GM12878 (cell line): ENCODE measurements at regions of chr5 and their contacts with region 1.

Region 1: DNA sequence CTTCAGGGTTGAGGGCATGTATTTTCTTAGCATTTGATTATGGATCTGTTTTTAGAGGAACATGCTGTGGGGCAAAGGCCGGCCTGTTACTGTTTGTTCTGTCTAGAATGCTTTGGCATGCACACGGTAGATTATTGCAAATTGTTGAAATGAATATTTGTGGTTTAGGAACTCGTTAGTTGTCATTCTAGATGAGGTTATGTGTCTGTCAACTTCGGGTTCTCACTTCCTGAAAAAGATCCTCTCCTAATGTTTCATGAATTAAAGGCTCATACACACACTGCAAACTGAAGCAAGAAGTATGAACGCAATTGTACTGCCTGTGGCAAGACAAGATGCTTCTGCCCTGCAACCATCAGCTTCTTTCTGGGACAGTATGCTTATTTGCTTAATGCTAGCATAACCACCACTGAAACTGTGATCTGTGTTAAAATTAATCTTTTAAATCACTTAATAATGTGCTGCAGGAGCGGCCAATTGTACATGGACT is 99.6 kb downstream of the BASP1 start:
- DNase-seq: peak; percentile 82
- ATAC-seq: peak; percentile 79
- H3K4me3 ChIP-seq: 0 out of 2 replicates have a peak overlapping the region, but pooled peaks have one; percentile 16
- H3K27ac ChIP-seq: peak overlapping the region; percentile 66
- H3K4me1 ChIP-seq: peaks cover 43% of the 10 kb centered on the region
- H3K27me3 ChIP-seq: no peaks in the 10 kb centered on the region
- CTCF ChIP-seq: no peak
- EP300 ChIP-seq: peak; percentile 95 to 98
- POLR2A ChIP-seq: no peak
- RAD21 ChIP-seq: no peak

Region 2: GRCh38 chr5:17221843-17222636 is 95.0 kb before region 1 on chr5:
- CTCF ChIA-PET with region 1: interaction called, 16 read pairs
- POLR2A ChIA-PET with region 1: interaction called, 8 read pairs
- RAD21 ChIA-PET with region 1: interaction called, 29 read pairs
- SMC1A ChIA-PET with region 1: interaction called, 36 read pairs
- in situ Hi-C with region 1: loop called (anchors 5 kb)
- intact Hi-C with region 1: loop called (anchors 1 kb)
- DNase-seq: no peak
- ATAC-seq: peak; percentile 33
- H3K4me3 ChIP-seq: peak overlapping the region; percentile 17; the same call in 1 of the 2 replicates
- H3K27ac ChIP-seq: peak overlapping the region; percentile 40
- H3K4me1 ChIP-seq: peaks cover 30% of the 10 kb centered on the region; the same call in 1 of the 2 replicates
- H3K27me3 ChIP-seq: no peaks in the 10 kb centered on the region
- CTCF ChIP-seq: no peak
- EP300 ChIP-seq: no peak
- POLR2A ChIP-seq: no peak
- RAD21 ChIP-seq: no peak

Region 3: GRCh38 chr5:17228821-17229291 is 88.2 kb before region 1 on chr5:
- CTCF ChIA-PET with region 1: interaction called, 5 read pairs
- POLR2A ChIA-PET with region 1: interaction called, 8 read pairs
- RAD21 ChIA-PET with region 1: interaction called, 16 read pairs
- SMC1A ChIA-PET with region 1: interaction called, 36 read pairs
- in situ Hi-C with region 1: loop called (anchors 5 kb)
- intact Hi-C with region 1: loop called (anchors 1 kb)
- DNase-seq: peak; percentile 66
- ATAC-seq: peak; percentile 64
- H3K4me3 ChIP-seq: peak overlapping the region; percentile 13; the same call in 1 of the 2 replicates
- H3K27ac ChIP-seq: peak overlapping the region; percentile 88
- H3K4me1 ChIP-seq: peaks cover 34% of the 10 kb centered on the region
- H3K27me3 ChIP-seq: no peaks in the 10 kb centered on the region
- CTCF ChIP-seq: no peak
- EP300 ChIP-seq: peak; percentile 24 to 35; a peak in 1 of 4 replicates
- POLR2A ChIP-seq: no peak
- RAD21 ChIP-seq: 0 out of 2 replicates have a peak, but pooled peaks have one; percentile 1

Region 4: DNA sequence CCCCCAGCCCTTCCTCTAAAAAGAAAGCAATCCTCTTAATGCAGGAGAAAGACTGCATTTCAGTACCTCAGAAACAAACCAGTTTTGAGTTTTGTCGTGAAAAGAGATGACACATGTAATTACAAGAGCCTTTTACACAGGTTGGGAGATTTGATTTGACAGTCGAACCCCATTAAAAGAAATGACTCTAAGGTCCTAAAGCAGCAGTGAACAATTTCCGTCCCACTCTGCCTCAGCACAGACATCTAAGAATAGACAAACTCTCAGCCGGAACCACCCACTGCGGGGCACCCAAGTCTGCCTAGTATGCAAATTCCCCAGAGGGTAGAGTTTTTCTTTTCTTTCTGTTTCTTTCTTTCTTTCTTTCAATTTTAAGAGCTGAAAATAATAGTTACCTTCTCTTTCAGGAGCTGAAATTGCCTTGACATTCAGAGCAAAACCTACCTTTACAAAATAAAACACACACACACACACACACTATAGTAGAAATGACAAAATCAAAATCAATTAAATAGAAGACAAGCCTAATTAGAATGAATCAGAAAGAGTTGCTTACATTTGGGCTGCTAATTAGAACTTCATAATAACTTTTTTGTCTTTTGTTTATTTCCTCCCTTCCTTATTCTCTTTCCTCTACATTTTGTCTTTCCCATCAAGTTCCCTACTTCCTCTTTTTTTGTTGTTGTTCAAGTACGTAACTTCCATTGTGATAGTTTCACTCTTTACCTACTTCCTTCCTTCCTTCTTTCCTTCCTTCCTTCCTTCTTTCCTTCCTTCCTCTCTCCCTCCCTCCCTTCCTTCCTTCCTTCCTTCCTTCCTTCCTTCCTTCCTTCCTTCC is 34.5 kb before region 1 on chr5:
- CTCF ChIA-PET with region 1: interaction called, 4 read pairs
- POLR2A ChIA-PET with region 1: interaction called, 12 read pairs
- RAD21 ChIA-PET with region 1: interaction called, 23 read pairs
- SMC1A ChIA-PET with region 1: interaction called, 17 read pairs
- in situ Hi-C with region 1: loop called (anchors 5 kb)
- intact Hi-C with region 1: loop called (anchors 1 kb)
- DNase-seq: peak; percentile 91
- ATAC-seq: peak; percentile 95
- H3K4me3 ChIP-seq: peak overlapping the region; percentile 55
- H3K27ac ChIP-seq: peak overlapping the region; percentile 71
- H3K4me1 ChIP-seq: peaks cover 18% of the 10 kb centered on the region
- H3K27me3 ChIP-seq: no peaks in the 10 kb centered on the region
- CTCF ChIP-seq: no peak; a peak in 1 of 6 replicates
- EP300 ChIP-seq: peak; percentile 45 to 61; a peak in 3 of 4 replicates
- POLR2A ChIP-seq: no peak
- RAD21 ChIP-seq: no peak; the same call in 1 of the 2 replicates

Region 5: GRCh38 chr5:17426104-17426749 is 109.2 kb after region 1 on chr5:
- CTCF ChIA-PET with region 1: no interaction called
- POLR2A ChIA-PET with region 1: no interaction called
- RAD21 ChIA-PET with region 1: interaction called, 3 read pairs
- SMC1A ChIA-PET with region 1: interaction called, 3 read pairs
- in situ Hi-C with region 1: no loop called
- intact Hi-C with region 1: loop called (anchors 2 kb)
- DNase-seq: peak; percentile 11
- ATAC-seq: peak; percentile 93
- H3K4me3 ChIP-seq: no peak overlapping the region; the same call in 1 of the 2 replicates
- H3K27ac ChIP-seq: no peak overlapping the region
- H3K4me1 ChIP-seq: peaks cover 14% of the 10 kb centered on the region
- H3K27me3 ChIP-seq: no peaks in the 10 kb centered on the region
- CTCF ChIP-seq: no peak
- EP300 ChIP-seq: no peak
- POLR2A ChIP-seq: no peak
- RAD21 ChIP-seq: no peak

Region 6: DNA sequence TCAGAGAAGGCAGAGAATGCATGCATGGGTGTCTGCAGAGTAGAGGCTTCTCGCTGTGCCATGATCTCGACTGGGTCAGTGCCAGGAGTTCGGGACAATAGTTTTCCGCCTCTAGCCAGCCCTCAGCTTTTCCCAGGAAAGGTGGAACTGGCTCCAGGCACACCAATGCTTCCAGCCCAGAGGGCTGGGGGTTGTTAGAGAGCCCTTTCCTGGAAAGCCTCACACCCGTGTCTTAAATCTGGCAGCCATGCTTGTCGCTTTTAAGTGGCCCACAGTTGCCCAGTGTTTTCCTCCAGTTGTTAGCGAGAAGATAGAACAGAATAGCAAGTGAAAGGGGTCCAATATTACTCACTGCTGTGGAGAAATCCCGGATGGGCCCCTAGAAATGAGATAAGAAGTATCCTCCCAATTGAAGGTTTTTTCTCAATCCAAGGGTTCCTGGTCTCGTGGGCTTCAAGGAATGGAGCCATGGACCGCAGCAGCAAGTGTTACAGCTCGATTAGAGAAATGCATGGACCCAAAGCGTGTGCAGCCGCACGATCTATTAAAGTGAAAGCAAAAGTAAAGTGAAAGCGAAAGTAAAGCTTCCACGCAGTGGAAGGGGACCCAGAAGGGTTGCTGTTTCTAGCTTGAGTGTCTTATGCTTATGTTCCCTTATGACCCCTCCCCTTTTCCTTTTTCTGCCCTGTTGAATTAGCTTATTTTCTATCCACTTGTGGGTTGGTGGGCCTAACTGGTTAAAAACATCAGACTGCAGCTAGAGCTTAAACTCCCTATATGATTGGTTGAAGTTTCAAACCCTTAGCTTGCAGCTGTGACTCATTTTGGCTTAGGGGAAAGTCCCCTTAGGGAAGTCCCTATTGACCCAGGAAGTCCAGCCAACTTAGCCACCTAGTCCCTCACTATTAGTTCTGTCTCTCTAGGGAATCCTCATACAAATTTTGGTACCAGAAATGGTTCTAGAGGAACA is 1428.9 kb after region 1 on chr5:
- CTCF ChIA-PET with region 1: no interaction called
- POLR2A ChIA-PET with region 1: no interaction called
- RAD21 ChIA-PET with region 1: no interaction called
- SMC1A ChIA-PET with region 1: no interaction called
- in situ Hi-C with region 1: no loop called
- intact Hi-C with region 1: loop called (anchors 5 kb)
- DNase-seq: peak; percentile 89
- ATAC-seq: peak; percentile 75
- H3K4me3 ChIP-seq: peak overlapping the region; percentile 84
- H3K27ac ChIP-seq: peak overlapping the region; percentile 82
- H3K4me1 ChIP-seq: peaks cover 24% of the 10 kb centered on the region
- H3K27me3 ChIP-seq: no peaks in the 10 kb centered on the region
- CTCF ChIP-seq: no peak
- EP300 ChIP-seq: peak in 1 of 2 experiments; percentile 48; a peak in 1 of 4 replicates
- POLR2A ChIP-seq: peak; percentile 49
- RAD21 ChIP-seq: no peak